Dorsolateral prefrontal cortex (tissue), 120 donors: ENCODE measurements at regions of chr3 and their contacts with region 1.

Region 1: GRCh38 chr3:141192345-141192744 is 39.3 kb upstream of the PXYLP1 start:
- DNase-seq: peak; percentile 94 to 100 (median 98)
- H3K4me3 ChIP-seq: no peak overlapping the region
- H3K27ac ChIP-seq: no peak overlapping the region
- H3K27me3 ChIP-seq: peaks cover 0 to 8% (median 0%) of the 10 kb centered on the region in 45 donors
- CTCF ChIP-seq: peak; percentile 82 to 100 (median 99)

Region 2: GRCh38 chr3:140298569-140299070 is 893.7 kb before region 1 on chr3:
- intact Hi-C with region 1: no loop called
- DNase-seq: no peak
- H3K4me3 ChIP-seq: no peak overlapping the region
- H3K27ac ChIP-seq: no peak overlapping the region
- H3K27me3 ChIP-seq: no peaks in the 10 kb centered on the region
- CTCF ChIP-seq: no peak

Region 3: DNA sequence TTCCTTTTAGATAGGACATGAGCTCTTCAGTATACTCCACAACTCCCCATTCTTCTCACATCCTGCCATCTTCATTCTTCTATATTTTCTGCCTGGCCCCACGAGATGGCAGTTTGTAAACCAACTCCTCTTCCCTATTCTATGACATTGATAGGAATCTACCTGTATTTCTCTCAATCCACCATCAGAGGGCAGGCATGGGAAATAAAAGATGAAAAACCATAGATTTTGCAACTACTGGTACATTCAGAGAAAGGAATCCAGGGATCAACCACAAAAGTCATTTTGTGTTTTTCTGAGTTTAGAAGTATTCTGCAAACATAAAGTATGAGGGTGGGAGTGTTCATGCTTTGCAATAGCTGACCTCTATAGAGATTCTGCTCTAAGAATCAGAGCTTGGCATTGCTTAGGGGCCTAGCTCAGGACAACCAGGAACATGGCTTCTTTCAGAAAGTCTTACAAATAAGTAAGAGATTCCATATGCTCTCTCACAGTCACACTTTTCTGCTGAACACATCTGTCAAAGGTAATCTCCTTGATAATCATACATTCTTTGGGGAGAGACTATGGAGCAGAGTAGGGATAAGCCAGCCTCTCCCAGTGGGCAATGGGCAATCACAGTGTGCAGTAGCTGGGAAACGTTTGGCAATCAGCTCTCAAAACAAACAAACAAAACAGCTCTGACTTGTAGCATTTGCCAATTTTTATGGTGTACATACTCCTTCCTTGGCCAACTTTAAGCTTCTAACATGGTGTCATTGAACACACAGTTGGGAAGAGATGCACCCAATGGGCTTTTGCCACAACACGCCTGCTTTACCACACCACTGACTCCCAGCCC is 293.8 kb before region 1 on chr3:
- intact Hi-C with region 1: loop called (anchors 5 kb)
- DNase-seq: no peak
- H3K4me3 ChIP-seq: no peak overlapping the region
- H3K27ac ChIP-seq: no peak overlapping the region
- H3K27me3 ChIP-seq: no peaks in the 10 kb centered on the region
- CTCF ChIP-seq: peak; percentile 35 to 83 (median 66)

Region 4: DNA sequence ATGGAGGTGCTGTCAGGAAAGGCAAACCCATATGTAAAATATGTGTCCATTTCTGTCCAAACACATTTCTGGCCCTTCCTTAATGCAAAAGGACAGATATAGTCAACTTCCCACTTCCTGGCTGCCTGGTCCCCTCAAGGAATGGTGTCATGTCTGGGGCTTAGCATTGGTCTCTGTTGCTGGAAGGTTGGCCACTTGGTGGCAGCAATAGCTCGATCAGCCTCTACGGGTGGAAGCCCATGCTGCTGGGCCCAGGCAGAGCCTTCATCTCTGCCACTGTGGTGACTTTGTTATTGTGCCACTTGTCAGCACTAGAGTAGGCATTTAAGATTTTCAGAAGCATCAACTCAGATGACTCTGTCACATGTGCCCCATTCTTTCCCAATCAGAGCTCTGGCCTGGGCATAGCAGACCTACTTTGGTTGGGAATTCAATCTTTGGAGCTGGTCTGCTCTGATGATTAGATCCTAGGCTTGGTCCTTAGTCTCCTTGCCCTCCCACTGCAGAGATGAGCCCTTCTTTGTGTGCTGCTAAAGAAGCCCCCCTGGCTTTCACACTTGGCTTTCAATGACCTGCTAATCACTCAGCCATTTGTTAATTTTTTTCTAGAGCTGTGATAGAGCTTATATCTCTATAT is 192.2 kb before region 1 on chr3:
- intact Hi-C with region 1: loop called (anchors 2 to 5 kb)
- DNase-seq: peak; percentile 30 to 80 (median 68)
- H3K4me3 ChIP-seq: no peak overlapping the region
- H3K27ac ChIP-seq: no peak overlapping the region
- H3K27me3 ChIP-seq: no peaks in the 10 kb centered on the region
- CTCF ChIP-seq: peak in 55 of 56 donors; percentile 35 to 87 (median 72)